GM12878 (cell line): ENCODE measurements at regions of chr13 and their contacts with region 1.

Region 1: GRCh38 chr13:29210676-29211075 is 384.8 kb downstream of the SLC7A1 start:
- DNase-seq: no peak
- ATAC-seq: no peak
- H3K4me3 ChIP-seq: no peak overlapping the region
- H3K27ac ChIP-seq: no peak overlapping the region
- H3K4me1 ChIP-seq: no peaks in the 10 kb centered on the region
- H3K27me3 ChIP-seq: no peaks in the 10 kb centered on the region
- CTCF ChIP-seq: no peak
- EP300 ChIP-seq: no peak
- POLR2A ChIP-seq: no peak
- RAD21 ChIP-seq: no peak

Region 2: GRCh38 chr13:29354377-29354776 is 143.7 kb after region 1 on chr13:
- CTCF ChIA-PET with region 1: interaction called, 3 read pairs
- POLR2A ChIA-PET with region 1: no interaction called
- RAD21 ChIA-PET with region 1: no interaction called
- SMC1A ChIA-PET with region 1: no interaction called
- in situ Hi-C with region 1: loop called (anchors 5 kb)
- intact Hi-C with region 1: no loop called
- DNase-seq: no peak
- ATAC-seq: no peak
- H3K4me3 ChIP-seq: no peak overlapping the region
- H3K27ac ChIP-seq: no peak overlapping the region
- H3K4me1 ChIP-seq: no peaks in the 10 kb centered on the region
- H3K27me3 ChIP-seq: no peaks in the 10 kb centered on the region; a peak in 1 of 4 replicates
- CTCF ChIP-seq: no peak
- EP300 ChIP-seq: no peak
- POLR2A ChIP-seq: no peak
- RAD21 ChIP-seq: no peak